ENCODE measurements at regions of chr1 and their contacts with region 1.

Region 1: GRCh38 chr1:204506961-204507387 is 9.2 kb upstream of the MDM4 start:
- DNase-seq: peak; percentile 52 to 97 (median 92)
- ATAC-seq: peak; percentile 73 to 77
- H3K4me3 Mint-ChIP-seq: peak overlapping the region; percentile 78 to 98 (median 93)
- H3K27ac Mint-ChIP-seq: peak overlapping the region; percentile 88 to 100 (median 99)
- H3K4me1 Mint-ChIP-seq: peaks cover 22 to 53% (median 40%) of the 10 kb centered on the region in 4 donors
- H3K27me3 Mint-ChIP-seq: peaks cover 0 to 7% (median 0%) of the 10 kb centered on the region in 5 donors

Region 2: DNA sequence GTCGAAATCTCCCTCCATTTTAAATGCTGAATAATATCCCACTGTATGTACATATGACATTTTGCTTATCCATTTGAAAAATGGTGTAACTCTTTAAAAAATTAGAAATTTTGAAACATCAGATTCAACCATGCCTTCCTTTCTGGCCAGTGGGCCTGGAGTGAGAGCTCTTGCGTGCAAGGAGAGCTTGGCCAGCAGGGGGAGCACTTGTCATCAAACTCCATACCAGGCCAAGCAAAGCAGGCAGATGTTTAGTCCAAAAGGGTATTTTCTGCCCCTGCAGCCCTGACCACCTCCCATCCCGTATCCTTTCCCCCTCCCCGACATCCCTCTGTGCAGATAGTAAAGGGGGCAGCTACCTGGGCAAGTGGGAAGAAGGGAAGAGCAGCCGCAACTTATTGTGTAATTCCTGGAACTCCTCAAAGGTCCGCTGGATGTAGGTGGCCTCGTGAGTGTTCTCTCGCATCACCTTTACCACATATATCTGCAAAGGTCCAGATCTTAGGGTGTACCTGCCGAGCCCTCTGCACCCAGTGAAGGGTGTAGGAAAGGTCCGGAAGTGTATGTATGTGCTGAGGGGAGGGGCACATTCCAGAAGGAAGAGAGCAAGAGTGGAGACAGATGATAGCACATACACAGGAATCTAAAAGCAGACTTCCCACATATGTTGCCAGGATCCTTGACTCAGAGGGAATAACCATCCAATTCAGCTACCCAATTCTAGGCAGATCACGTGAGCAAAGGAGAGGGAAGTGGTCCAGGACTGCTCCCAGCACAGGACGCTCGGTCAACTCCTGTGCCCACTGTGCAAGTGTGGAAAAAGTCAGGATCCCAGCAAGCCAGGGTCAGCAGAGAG is 75.4 kb before region 1 on chr1:
- POLR2A ChIA-PET with region 1: interaction called, 10 read pairs
- DNase-seq: peak; percentile 57 to 85 (median 73)
- ATAC-seq: peak; percentile 80 to 94
- H3K4me3 Mint-ChIP-seq: no peak overlapping the region
- H3K27ac Mint-ChIP-seq: peak overlapping the region in 5 of 10 donors; percentile 20 to 62 (median 30)
- H3K4me1 Mint-ChIP-seq: peaks cover 0 to 9% (median 5%) of the 10 kb centered on the region in 4 donors
- H3K27me3 Mint-ChIP-seq: no peaks in the 10 kb centered on the region

Region 3: GRCh38 chr1:204446370-204447111 is 60.4 kb before region 1 on chr1:
- POLR2A ChIA-PET with region 1: interaction called, 26 read pairs
- DNase-seq: peak; percentile 64 to 88 (median 74)
- ATAC-seq: peak; percentile 99 to 100
- H3K4me3 Mint-ChIP-seq: peak overlapping the region in 2 of 10 donors; percentile 53 to 66
- H3K27ac Mint-ChIP-seq: peak overlapping the region; percentile 73 to 97 (median 90)
- H3K4me1 Mint-ChIP-seq: peaks cover 7 to 42% (median 10%) of the 10 kb centered on the region in 4 donors
- H3K27me3 Mint-ChIP-seq: no peaks in the 10 kb centered on the region

Region 4: DNA sequence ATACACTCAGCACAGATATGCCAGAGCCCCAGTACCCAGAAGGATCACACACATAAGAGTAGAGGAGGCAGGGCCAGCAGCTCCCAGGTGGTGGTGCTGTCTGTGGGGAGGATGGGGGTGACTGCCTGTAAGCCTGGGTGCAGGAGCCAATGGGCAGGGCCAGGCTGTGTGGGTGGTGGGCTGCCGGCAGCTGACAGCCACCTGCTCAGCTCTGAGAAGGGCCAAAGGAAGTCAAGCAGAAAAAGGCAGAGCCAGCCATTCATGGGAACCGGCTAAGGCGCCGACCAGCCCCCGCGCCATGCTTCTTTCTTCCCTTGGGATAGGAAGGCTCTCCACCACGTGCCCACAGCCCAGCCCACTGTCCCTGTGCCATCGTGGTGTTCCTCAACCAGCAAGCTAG is 26.5 kb before region 1 on chr1:
- POLR2A ChIA-PET with region 1: no interaction called
- DNase-seq: no peak
- ATAC-seq: peak; percentile 36 to 57
- H3K4me3 Mint-ChIP-seq: peak overlapping the region in 6 of 10 donors; percentile 22 to 67 (median 54)
- H3K27ac Mint-ChIP-seq: peak overlapping the region in 8 of 10 donors; percentile 53 to 87 (median 72)
- H3K4me1 Mint-ChIP-seq: peaks cover 43 to 91% (median 81%) of the 10 kb centered on the region in 4 donors
- H3K27me3 Mint-ChIP-seq: no peaks in the 10 kb centered on the region

Region 5: DNA sequence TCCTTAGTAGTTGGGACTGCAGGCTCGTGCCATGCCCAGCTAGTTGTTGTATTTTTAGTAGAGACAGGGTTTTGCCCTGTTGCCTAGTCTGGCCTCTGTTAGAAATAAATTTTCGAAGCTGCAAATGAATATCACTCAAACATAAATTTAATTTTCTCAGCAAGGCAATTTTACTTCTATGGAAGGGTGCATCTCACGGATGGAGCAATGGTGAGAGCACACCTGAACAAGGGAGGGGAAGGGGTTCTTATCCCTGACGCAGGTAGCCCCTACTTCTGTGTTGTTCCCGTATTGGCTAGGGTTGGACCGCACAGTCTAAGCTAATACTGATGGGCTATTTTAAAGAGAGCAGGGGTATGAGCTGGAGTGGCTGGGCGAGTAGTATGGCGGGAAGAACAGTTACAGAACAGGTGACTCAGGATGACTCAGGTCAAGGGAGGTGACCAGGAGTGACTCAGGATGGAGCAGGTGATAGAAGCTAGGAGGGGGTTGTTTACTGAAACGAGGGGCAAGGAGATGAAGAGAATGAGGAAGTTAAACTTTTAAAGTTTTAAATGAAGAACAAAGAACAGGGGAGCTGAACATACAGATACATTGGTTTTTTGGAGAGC is 16.7 kb after region 1 on chr1:
- POLR2A ChIA-PET with region 1: interaction called, 171 read pairs
- DNase-seq: no peak
- ATAC-seq: no peak
- H3K4me3 Mint-ChIP-seq: peak overlapping the region in 9 of 10 donors; percentile 31 to 82 (median 59)
- H3K27ac Mint-ChIP-seq: peak overlapping the region; percentile 51 to 91 (median 84)
- H3K4me1 Mint-ChIP-seq: peaks cover 29 to 80% (median 72%) of the 10 kb centered on the region in 4 donors
- H3K27me3 Mint-ChIP-seq: no peaks in the 10 kb centered on the region

Region 6: DNA sequence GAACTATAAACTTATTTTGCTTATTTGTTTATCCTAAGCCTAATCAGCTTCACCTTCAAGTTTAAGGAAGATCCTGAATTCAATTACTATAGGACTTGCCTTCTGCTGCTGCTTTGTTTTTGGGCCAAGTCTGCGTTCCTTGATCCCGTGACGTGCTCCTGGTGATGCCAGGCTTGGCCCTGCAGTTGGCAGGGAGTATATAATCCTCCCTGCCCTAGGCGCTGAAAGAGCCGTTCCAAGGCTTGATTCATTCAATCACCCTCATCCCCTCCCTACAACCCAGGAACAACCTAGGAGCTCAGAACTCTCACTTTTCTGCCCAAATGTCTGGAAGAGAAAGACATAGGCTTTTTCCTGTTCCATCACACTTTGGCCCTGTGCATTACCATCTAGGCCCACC is 190.9 kb after region 1 on chr1:
- POLR2A ChIA-PET with region 1: no interaction called
- DNase-seq: no peak
- ATAC-seq: no peak
- H3K4me3 Mint-ChIP-seq: no peak overlapping the region
- H3K27ac Mint-ChIP-seq: no peak overlapping the region
- H3K4me1 Mint-ChIP-seq: peaks cover 0 to 5% (median 0%) of the 10 kb centered on the region in 4 donors
- H3K27me3 Mint-ChIP-seq: peaks cover 0 to 1% (median 0%) of the 10 kb centered on the region in 5 donors